Esophagus squamous epithelium (tissue), 5 donors: ENCODE measurements at regions of chr2 and their contacts with region 1.

Region 1: DNA sequence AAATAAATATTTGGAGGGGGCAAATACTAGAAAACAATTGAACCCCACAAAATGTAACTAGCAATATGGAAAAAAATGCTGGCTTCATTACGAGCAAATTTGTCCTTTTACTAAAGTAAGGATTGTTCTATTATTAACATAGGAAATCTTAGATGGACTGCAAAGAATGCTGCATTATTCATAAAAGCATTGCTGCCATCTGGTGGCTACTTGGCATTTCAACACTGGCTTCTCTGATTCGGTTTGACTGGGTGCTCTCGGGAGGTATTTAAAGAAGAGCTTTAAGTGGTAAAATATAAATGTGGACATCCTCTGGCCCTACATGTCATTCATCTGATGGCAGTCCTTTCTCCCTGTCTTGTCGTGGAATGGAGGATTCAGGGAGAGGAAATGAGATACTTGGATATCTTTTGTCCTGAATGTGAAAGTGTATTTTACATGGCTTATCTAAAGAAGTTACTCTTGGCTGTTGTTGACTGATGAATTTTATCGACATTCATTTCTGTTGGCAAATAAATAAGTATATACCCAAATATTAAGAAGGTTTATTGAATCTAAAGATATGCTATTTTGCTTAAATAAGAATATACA is 130.2 kb downstream of the ARHGAP15 start:
- DNase-seq: no peak
- H3K4me3 ChIP-seq: peak overlapping the region in 1 of 4 donors; percentile 33
- H3K27ac ChIP-seq: no peak overlapping the region
- H3K4me1 ChIP-seq: peaks cover 0 to 7% (median 0%) of the 10 kb centered on the region in 3 donors
- H3K27me3 ChIP-seq: no peaks in the 10 kb centered on the region
- CTCF ChIP-seq: peak; percentile 51 to 74 (median 62)
- POLR2A ChIP-seq: no peak

Region 2: GRCh38 chr2:143034292-143035074 is 225.0 kb before region 1 on chr2:
- intact Hi-C with region 1: loop called (anchors 10 kb)
- DNase-seq: no peak
- H3K4me3 ChIP-seq: no peak overlapping the region
- H3K27ac ChIP-seq: no peak overlapping the region
- H3K4me1 ChIP-seq: no peaks in the 10 kb centered on the region
- H3K27me3 ChIP-seq: no peaks in the 10 kb centered on the region
- CTCF ChIP-seq: peak; percentile 87 to 99 (median 94)
- POLR2A ChIP-seq: no peak

Region 3: DNA sequence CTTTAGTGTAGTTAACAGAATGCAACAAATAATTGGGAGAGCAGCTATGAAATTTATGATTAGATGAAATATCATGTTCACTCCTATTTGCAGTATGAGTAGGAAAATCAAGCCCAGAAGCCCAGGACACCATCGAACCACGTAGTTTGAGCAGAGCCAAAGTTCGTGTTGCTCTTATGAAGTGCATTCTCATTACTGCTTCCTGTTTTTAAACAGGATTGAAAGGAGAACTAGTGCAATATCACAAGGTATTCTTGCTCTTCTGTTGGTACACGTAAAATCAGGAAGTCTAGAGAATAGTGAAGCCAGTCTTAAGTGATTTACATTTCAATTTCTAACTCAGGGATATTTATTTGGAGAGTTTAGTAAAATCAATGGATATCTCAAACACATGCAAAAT is 109.2 kb before region 1 on chr2:
- intact Hi-C with region 1: no loop called
- DNase-seq: no peak
- H3K4me3 ChIP-seq: no peak overlapping the region
- H3K27ac ChIP-seq: no peak overlapping the region
- H3K4me1 ChIP-seq: no peaks in the 10 kb centered on the region
- H3K27me3 ChIP-seq: no peaks in the 10 kb centered on the region
- CTCF ChIP-seq: no peak
- POLR2A ChIP-seq: peak in 1 of 4 donors; percentile 20